B cell (primary cell): ENCODE measurements at regions of chr2 and their contacts with region 1.

Region 1: GRCh38 chr2:233711312-233712008 is 1.2 kb upstream of the UGT1A5 start:
- DNase-seq: peak; percentile 74
- ATAC-seq: peak; percentile 78
- H3K4me3 ChIP-seq: no peak overlapping the region
- H3K4me3 Mint-ChIP-seq: no peak overlapping the region
- H3K27ac ChIP-seq: no peak overlapping the region
- H3K27ac Mint-ChIP-seq: no peak overlapping the region
- H3K4me1 ChIP-seq: no peaks in the 10 kb centered on the region
- H3K4me1 Mint-ChIP-seq: peaks cover 3% of the 10 kb centered on the region
- H3K27me3 ChIP-seq: peaks cover 0 to 2% (median 0%) of the 10 kb centered on the region in 4 experiments
- H3K27me3 Mint-ChIP-seq: peaks cover 29% of the 10 kb centered on the region
- CTCF ChIP-seq: peak; percentile 88

Region 2: DNA sequence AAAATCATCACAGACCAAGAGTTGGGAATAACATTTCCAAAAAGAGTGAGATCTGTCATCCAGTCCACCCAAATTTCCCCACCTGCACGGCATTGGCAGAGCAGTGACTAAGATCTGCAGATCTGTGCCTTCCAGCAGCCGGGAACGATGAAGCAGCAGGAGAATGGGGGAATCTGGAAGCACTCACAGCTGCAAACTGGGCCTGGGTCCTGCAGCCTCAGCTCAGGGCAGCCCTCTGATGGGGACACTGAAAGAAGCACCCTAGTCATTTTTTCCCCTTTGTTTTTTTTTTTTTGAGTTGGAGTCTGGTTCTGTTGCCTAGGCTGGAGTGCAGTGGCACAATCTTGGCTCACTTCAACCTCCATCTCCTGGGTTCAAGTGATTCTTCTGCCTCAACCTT is 408.2 kb before region 1 on chr2:
- CTCF ChIA-PET with region 1: no interaction called
- POLR2A ChIA-PET with region 1: no interaction called
- intact Hi-C with region 1: no loop called
- DNase-seq: no peak
- ATAC-seq: no peak
- H3K4me3 ChIP-seq: no peak overlapping the region
- H3K4me3 Mint-ChIP-seq: no peak overlapping the region
- H3K27ac ChIP-seq: no peak overlapping the region
- H3K27ac Mint-ChIP-seq: no peak overlapping the region
- H3K4me1 ChIP-seq: no peaks in the 10 kb centered on the region
- H3K4me1 Mint-ChIP-seq: no peaks in the 10 kb centered on the region
- H3K27me3 ChIP-seq: no peaks in the 10 kb centered on the region
- H3K27me3 Mint-ChIP-seq: no peaks in the 10 kb centered on the region
- CTCF ChIP-seq: no peak

Region 3: DNA sequence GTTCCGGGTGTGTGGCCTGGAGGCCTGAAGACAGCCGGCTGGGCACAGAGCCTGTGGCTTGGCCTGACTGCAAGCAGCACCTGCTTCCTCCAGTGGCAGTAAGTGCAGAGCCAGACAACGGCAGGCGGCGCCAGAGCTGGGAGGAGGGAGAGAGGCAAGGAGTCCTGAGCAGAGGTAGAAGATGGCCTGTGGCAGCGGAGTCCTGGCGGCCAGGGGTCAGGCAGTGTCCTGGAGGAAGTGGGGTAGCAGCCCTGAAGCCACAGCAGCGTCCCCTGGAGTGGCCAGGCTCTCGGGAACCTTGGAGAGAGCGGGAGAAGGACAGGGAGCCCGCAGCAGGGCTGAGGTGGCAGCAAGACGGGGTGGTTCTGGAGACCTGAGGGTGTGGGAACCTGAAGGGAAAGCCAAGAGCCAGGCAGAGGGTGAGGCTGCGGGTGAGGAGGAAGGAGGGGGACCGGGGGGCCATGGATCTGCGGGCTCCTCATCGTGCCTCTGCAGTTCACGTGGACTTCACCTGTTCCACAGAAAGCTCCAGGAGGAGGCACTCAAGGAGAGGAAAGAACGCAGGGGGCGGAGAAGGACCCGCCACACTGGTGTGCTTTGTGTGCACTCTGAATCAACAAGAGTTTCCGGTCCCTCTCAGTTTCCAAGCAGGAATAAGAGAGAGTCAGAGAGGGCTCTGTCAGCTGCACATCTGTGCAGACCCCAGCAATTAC is 230.8 kb before region 1 on chr2:
- CTCF ChIA-PET with region 1: interaction called, 4 read pairs
- POLR2A ChIA-PET with region 1: no interaction called
- intact Hi-C with region 1: loop called (anchors 1 kb)
- DNase-seq: no peak
- ATAC-seq: no peak
- H3K4me3 ChIP-seq: no peak overlapping the region
- H3K4me3 Mint-ChIP-seq: no peak overlapping the region
- H3K27ac ChIP-seq: no peak overlapping the region
- H3K27ac Mint-ChIP-seq: peak overlapping the region; percentile 63
- H3K4me1 ChIP-seq: no peaks in the 10 kb centered on the region
- H3K4me1 Mint-ChIP-seq: no peaks in the 10 kb centered on the region
- H3K27me3 ChIP-seq: no peaks in the 10 kb centered on the region
- H3K27me3 Mint-ChIP-seq: no peaks in the 10 kb centered on the region
- CTCF ChIP-seq: no peak